ENCODE measurements at regions of chr11 and their contacts with region 1.

Region 1: DNA sequence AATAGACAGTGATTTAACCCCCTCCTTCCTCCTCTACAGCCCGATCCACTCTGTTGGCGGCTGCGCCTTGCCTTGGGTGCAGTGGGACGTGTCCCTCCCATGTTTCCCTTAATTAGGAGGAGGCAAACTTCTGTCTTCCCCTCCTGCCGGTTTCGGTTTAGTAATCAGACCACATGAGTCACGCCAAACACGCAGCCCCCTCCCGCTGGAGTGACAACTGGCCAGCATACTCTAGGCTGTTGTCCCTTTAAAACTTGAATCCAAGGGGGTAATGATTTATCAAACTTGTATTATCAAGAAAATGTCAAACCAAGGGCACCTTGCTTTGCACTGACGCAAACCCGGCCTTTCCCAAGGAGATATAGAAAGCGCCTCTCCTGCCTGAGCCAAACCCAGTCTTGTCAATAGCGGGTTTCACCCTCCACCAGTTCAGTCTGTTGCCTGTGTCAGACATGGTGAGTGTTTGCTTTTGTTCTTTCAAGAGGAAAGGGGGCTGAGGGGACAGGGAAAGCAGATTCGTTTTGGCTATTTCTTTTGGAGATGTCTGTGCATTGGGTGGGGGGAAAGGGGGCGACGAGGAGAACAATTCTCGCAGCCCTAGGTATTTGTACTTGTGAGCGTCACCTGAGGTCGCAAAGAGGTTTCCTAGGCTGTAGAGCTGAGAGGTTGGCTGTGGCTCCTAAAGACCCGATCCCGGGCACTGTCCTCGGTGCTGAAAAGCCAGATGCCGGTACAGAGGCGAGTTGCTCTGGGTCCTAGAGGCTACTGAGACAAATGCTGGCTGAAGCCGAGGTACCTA is at the start of gene SLC6A5:
- DNase-seq: peak; percentile 2
- H3K4me3 ChIP-seq: no peak within 1 kb of the TSS
- H3K27ac ChIP-seq: no peak within 1 kb of the TSS
- H3K4me1 ChIP-seq: no peaks in the 10 kb centered on the region
- CTCF ChIP-seq: no peak
- total RNA-seq, gene SLC6A5: not detected in 2 replicates

Region 2: GRCh38 chr11:20261526-20261925 is 337.9 kb before region 1 on chr11:
- CTCF ChIA-PET with region 1: no interaction called
- POLR2A ChIA-PET with region 1: no interaction called
- intact Hi-C with region 1: no loop called
- DNase-seq: no peak
- H3K4me3 ChIP-seq: no peak overlapping the region
- H3K27ac ChIP-seq: no peak overlapping the region
- H3K4me1 ChIP-seq: no peaks in the 10 kb centered on the region
- CTCF ChIP-seq: no peak

Region 3: GRCh38 chr11:20355221-20356219 is 243.9 kb before region 1 on chr11:
- CTCF ChIA-PET with region 1: no interaction called
- POLR2A ChIA-PET with region 1: no interaction called
- intact Hi-C with region 1: no loop called
- DNase-seq: peak; percentile 35
- H3K4me3 ChIP-seq: no peak overlapping the region
- H3K27ac ChIP-seq: no peak overlapping the region
- H3K4me1 ChIP-seq: no peaks in the 10 kb centered on the region
- CTCF ChIP-seq: peak; percentile 74

Region 4: GRCh38 chr11:20374746-20375300 is 224.6 kb before region 1 on chr11:
- CTCF ChIA-PET with region 1: no interaction called
- POLR2A ChIA-PET with region 1: no interaction called
- intact Hi-C with region 1: no loop called
- DNase-seq: no peak
- H3K4me3 ChIP-seq: no peak overlapping the region
- H3K27ac ChIP-seq: no peak overlapping the region
- H3K4me1 ChIP-seq: no peaks in the 10 kb centered on the region
- CTCF ChIP-seq: no peak

Region 5: DNA sequence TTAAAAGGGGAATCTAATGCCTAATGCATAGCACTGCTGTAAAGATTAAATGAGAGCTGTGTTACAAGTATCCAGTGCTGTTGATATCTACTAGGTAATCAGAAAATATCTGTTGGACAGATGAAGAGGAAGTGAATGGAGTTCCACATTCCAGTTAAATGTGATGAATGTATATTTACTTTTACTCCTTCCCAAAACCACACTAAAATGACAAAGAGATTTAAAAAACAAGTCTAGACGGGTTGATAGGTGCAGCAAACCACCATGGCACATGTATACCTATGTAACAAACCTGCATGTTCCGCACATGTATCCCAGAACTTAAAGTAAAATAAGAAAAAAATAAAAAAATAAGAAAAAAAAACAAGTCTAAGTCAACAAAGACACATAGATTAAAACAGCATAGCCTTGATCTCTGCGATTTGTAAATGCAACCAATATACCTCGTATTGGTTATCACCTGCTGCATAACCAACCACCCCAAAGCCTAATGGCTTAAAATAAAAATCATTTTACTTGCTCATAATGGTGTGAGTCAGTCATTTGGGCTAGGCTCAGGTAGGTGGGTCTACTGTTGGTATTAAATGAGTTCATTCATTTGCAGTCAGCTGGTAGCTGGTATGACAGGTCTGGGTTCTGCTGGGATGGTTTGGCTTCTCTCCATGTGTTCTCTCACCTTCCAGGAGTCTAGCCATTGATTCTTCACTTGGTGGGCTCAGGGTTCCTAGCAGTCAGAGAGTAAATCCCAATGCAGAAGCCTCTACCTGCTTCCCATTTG is 39.7 kb before region 1 on chr11:
- CTCF ChIA-PET with region 1: no interaction called
- POLR2A ChIA-PET with region 1: no interaction called
- intact Hi-C with region 1: loop called (anchors 2 kb)
- DNase-seq: no peak
- H3K4me3 ChIP-seq: no peak overlapping the region
- H3K27ac ChIP-seq: no peak overlapping the region
- H3K4me1 ChIP-seq: no peaks in the 10 kb centered on the region
- CTCF ChIP-seq: no peak